Head of caudate nucleus (tissue), 42 donors: ENCODE measurements at regions of chr20 and their contacts with region 1.

Region 1: DNA sequence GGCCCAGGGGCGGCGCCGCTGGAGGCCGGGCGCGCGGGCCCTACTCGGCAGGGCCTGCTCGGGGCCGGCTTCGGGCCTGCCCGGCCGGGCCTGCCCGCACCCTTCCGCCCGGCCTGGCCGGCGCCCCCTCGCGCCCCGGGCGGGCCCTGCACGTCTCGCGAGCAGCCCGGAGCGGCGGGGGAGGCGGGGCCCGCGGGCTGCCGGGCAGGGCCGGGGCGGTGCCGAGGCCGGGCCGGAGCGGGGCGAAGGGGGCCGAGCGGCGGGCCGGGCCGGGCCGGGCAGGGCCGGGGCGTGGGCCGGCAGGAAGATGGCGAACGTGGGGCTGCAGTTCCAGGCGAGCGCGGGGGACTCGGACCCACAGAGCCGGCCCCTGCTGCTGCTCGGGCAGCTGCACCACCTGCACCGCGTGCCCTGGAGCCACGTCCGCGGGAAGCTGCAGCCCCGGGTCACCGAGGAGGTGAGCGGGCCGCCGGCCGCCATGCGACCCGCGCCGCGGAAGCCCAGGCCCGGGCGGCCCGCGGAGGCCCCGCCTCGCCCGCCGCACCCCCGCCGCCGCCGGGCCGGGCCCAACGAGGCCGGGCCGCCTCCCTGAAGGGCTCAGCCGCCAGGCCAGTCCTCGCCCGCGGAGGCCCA is at the start of gene NPEPL1:
- DNase-seq: peak in 35 of 42 donors; percentile 27 to 80 (median 59)

Region 2: DNA sequence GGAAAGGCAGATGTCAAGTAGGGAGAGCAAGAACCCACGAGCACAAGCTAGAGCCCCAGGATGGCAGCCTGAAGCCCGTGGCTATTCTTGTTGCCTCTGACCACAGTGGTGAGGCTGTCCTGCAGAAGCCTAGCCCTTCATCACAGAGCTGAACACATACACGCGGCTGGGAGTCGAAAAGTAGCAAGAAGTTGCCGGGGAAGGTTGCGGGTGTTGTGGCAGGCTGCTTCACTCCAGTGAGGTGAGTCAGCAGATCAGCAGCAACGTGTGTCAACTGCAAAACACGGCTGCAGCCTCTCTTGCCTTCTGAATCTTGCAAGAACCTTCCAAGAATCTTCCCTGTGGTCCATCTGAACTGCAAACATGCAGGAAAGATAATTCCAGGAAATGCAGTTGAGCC is 52.3 kb before region 1 on chr20:
- intact Hi-C with region 1: no loop called
- DNase-seq: peak in 2 of 42 donors; percentile 20 to 28

Region 3: GRCh38 chr20:58650776-58651558 is 41.7 kb before region 1 on chr20 and contains the start of gene STX16:
- intact Hi-C with region 1: loop called (anchors 5 kb)
- DNase-seq: peak; percentile 71 to 96 (median 90)